GM12878 (cell line): ENCODE measurements at regions of chr10 and their contacts with region 1.

Region 1: DNA sequence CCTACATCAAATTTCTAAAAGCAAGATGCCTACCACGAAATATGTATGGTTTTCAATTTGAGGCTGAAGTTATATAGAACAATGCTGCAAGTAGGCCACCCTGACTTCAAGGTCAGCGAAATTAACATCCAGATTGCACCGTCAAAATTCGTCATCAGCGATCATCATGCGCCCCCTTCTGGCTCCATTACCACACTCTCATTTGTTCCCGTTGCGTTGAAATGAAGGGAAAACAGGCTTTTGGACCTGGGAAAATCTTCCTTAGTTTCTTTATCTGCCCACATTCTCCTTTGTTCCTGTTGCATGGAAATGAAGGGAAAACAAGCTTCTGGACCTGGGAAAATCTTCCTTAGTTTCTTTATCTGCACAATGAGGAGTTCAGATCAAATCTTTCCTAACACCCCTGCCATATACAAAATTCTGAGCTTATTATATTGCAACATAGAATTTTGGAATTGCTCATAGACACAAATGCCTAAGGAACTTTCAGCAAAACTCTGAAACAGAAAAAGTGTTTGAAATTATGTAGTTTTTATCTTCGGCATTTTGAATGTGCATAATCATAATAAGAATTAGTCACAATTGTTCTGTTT is 98.2 kb upstream of the PRKCQ start:
- DNase-seq: no peak
- ATAC-seq: peak; percentile 77
- H3K4me3 ChIP-seq: no peak overlapping the region
- H3K27ac ChIP-seq: no peak overlapping the region
- H3K4me1 ChIP-seq: no peaks in the 10 kb centered on the region
- H3K27me3 ChIP-seq: no peaks in the 10 kb centered on the region
- CTCF ChIP-seq: peak; percentile 73 to 75 (median 75)
- EP300 ChIP-seq: no peak
- POLR2A ChIP-seq: no peak
- RAD21 ChIP-seq: peak; percentile 72

Region 2: GRCh38 chr10:6409971-6410651 is 268.2 kb before region 1 on chr10:
- CTCF ChIA-PET with region 1: interaction called, 61 read pairs
- POLR2A ChIA-PET with region 1: no interaction called
- RAD21 ChIA-PET with region 1: interaction called, 7 read pairs
- SMC1A ChIA-PET with region 1: interaction called, 46 read pairs
- in situ Hi-C with region 1: no loop called
- intact Hi-C with region 1: no loop called
- DNase-seq: no peak
- ATAC-seq: peak; percentile 72
- H3K4me3 ChIP-seq: no peak overlapping the region
- H3K27ac ChIP-seq: no peak overlapping the region
- H3K4me1 ChIP-seq: no peaks in the 10 kb centered on the region
- H3K27me3 ChIP-seq: no peaks in the 10 kb centered on the region; a peak in 1 of 4 replicates
- CTCF ChIP-seq: no peak
- EP300 ChIP-seq: no peak
- POLR2A ChIP-seq: no peak
- RAD21 ChIP-seq: no peak

Region 3: GRCh38 chr10:6416892-6417512 is 261.3 kb before region 1 on chr10:
- CTCF ChIA-PET with region 1: interaction called, 61 read pairs
- POLR2A ChIA-PET with region 1: no interaction called
- RAD21 ChIA-PET with region 1: interaction called, 14 read pairs
- SMC1A ChIA-PET with region 1: interaction called, 46 read pairs
- in situ Hi-C with region 1: no loop called
- intact Hi-C with region 1: loop called (anchors 1 kb)
- DNase-seq: no peak
- ATAC-seq: peak; percentile 83
- H3K4me3 ChIP-seq: no peak overlapping the region
- H3K27ac ChIP-seq: no peak overlapping the region
- H3K4me1 ChIP-seq: no peaks in the 10 kb centered on the region
- H3K27me3 ChIP-seq: no peaks in the 10 kb centered on the region; a peak in 2 of 4 replicates
- CTCF ChIP-seq: peak; percentile 65 to 82 (median 68)
- EP300 ChIP-seq: no peak
- POLR2A ChIP-seq: no peak
- RAD21 ChIP-seq: peak; percentile 87

Region 4: GRCh38 chr10:6423004-6423403 is 255.3 kb before region 1 on chr10:
- CTCF ChIA-PET with region 1: interaction called, 61 read pairs
- POLR2A ChIA-PET with region 1: no interaction called
- RAD21 ChIA-PET with region 1: interaction called, 14 read pairs
- SMC1A ChIA-PET with region 1: interaction called, 46 read pairs
- in situ Hi-C with region 1: loop called (anchors 5 kb)
- intact Hi-C with region 1: no loop called
- DNase-seq: no peak
- ATAC-seq: no peak; the same call in 2 of the 3 replicates
- H3K4me3 ChIP-seq: no peak overlapping the region
- H3K27ac ChIP-seq: no peak overlapping the region
- H3K4me1 ChIP-seq: no peaks in the 10 kb centered on the region
- H3K27me3 ChIP-seq: no peaks in the 10 kb centered on the region; a peak in 1 of 4 replicates
- CTCF ChIP-seq: no peak
- EP300 ChIP-seq: no peak
- POLR2A ChIP-seq: no peak
- RAD21 ChIP-seq: no peak